H1 (cell line): ENCODE measurements at regions of chr6 and their contacts with region 1.

Region 1: GRCh38 chr6:158468666-158469065 is 91.2 kb upstream of the TMEM181 start:
- DNase-seq: no peak
- H3K4me3 ChIP-seq: no peak overlapping the region
- H3K27ac ChIP-seq: no peak overlapping the region
- H3K4me1 ChIP-seq: peaks cover 3 to 23% (median 9%) of the 10 kb centered on the region in 4 experiments
- H3K27me3 ChIP-seq: peaks cover 32 to 62% (median 58%) of the 10 kb centered on the region in 4 experiments
- CTCF ChIP-seq: no peak
- EP300 ChIP-seq: no peak
- POLR2A ChIP-seq: no peak
- RAD21 ChIP-seq: peak; percentile 32 to 45; a peak in 3 of 4 replicates

Region 2: GRCh38 chr6:158481690-158482473 is 13.2 kb after region 1 on chr6:
- CTCF ChIA-PET with region 1: interaction called, 10 read pairs
- POLR2A ChIA-PET with region 1: interaction called, 5 read pairs
- DNase-seq: no peak
- H3K4me3 ChIP-seq: no peak overlapping the region
- H3K27ac ChIP-seq: no peak overlapping the region; the same call in 1 of the 2 replicates
- H3K4me1 ChIP-seq: no peaks in the 10 kb centered on the region
- H3K27me3 ChIP-seq: no peaks in the 10 kb centered on the region
- CTCF ChIP-seq: no peak
- EP300 ChIP-seq: no peak
- POLR2A ChIP-seq: no peak
- RAD21 ChIP-seq: no peak